Ovary (tissue), 10 donors: ENCODE measurements at regions of chr3 and their contacts with region 1.

Region 1: DNA sequence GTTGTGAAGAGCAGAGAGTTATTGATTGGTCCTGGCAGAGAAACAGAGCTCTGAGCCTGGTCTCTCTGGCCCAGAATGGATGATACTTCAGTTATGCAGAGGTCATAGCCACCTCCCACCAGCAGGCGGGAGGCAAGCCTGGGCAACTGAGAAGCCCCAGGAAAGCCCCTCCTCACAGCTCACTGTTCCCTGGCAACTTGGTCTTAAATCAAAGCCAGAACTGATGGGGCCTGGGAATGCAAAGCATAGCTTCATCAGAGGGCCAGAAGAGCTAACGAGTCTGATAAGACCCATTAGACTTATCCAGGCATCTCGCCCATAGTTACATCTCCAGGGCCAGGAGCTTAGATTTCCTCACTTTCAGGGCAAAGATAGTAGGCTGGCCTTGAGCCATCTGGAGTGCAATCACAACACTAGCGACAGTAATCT is 5.5 kb upstream of the COLQ start:
- DNase-seq: peak; percentile 14 to 49 (median 38)
- H3K4me3 ChIP-seq: no peak overlapping the region
- H3K27ac ChIP-seq: no peak overlapping the region
- H3K4me1 ChIP-seq: peaks cover 5% of the 10 kb centered on the region
- H3K27me3 ChIP-seq: no peaks in the 10 kb centered on the region
- CTCF ChIP-seq: peak in 1 of 3 donors; percentile 19
- EP300 ChIP-seq: no peak
- POLR2A ChIP-seq: no peak

Region 2: GRCh38 chr3:15241341-15241740 is 285.7 kb before region 1 on chr3:
- intact Hi-C with region 1: loop called in 1 of 4 experiments (anchors 5 kb)
- DNase-seq: peak; percentile 42 to 73 (median 69)
- H3K4me3 ChIP-seq: no peak overlapping the region
- H3K27ac ChIP-seq: no peak overlapping the region
- H3K4me1 ChIP-seq: no peaks in the 10 kb centered on the region
- H3K27me3 ChIP-seq: no peaks in the 10 kb centered on the region
- CTCF ChIP-seq: peak in 2 of 3 donors; percentile 40 to 55
- EP300 ChIP-seq: no peak
- POLR2A ChIP-seq: no peak

Region 3: GRCh38 chr3:15542614-15543013 is 15.6 kb after region 1 on chr3:
- intact Hi-C with region 1: no loop called
- DNase-seq: no peak
- H3K4me3 ChIP-seq: no peak overlapping the region
- H3K27ac ChIP-seq: no peak overlapping the region
- H3K4me1 ChIP-seq: no peaks in the 10 kb centered on the region
- H3K27me3 ChIP-seq: no peaks in the 10 kb centered on the region
- CTCF ChIP-seq: no peak
- EP300 ChIP-seq: no peak
- POLR2A ChIP-seq: no peak